ENCODE measurements at regions of chr14 and their contacts with region 1.

Region 1: DNA sequence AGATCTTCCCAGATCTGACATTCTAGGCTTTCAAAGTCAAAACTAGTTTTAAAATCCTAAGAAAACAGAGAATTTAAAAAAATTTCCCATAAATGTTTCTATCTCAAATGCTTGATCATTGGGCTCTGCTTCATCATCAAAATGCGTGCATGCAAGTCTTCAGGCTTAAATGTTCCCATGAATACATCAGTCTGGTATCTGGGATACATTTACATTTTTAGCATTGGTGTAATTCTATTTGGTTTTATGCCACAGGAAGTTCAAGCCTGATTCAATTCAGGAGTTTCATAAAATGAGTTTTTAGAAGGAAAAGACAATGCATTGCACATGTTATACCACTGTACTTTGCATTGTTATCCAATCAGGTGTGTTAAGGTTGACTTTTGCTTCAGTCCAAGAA is 336.4 kb downstream of the PCNX1 start:
- DNase-seq: no peak
- H3K4me3 ChIP-seq: no peak overlapping the region
- H3K27ac ChIP-seq: no peak overlapping the region
- H3K4me1 ChIP-seq: no peaks in the 10 kb centered on the region
- H3K27me3 ChIP-seq: no peaks in the 10 kb centered on the region
- CTCF ChIP-seq: no peak
- POLR2A ChIP-seq: no peak

Region 2: GRCh38 chr14:70595443-70596185 is 648.1 kb before region 1 on chr14:
- intact Hi-C with region 1: no loop called
- DNase-seq: no peak
- H3K4me3 ChIP-seq: no peak overlapping the region
- H3K27ac ChIP-seq: no peak overlapping the region
- H3K4me1 ChIP-seq: peaks cover 0 to 9% of the 10 kb centered on the region in 2 donors
- H3K27me3 ChIP-seq: no peaks in the 10 kb centered on the region
- CTCF ChIP-seq: no peak
- POLR2A ChIP-seq: no peak

Region 3: GRCh38 chr14:71212683-71213107 is 31.0 kb before region 1 on chr14:
- intact Hi-C with region 1: loop called (anchors 2 kb)
- DNase-seq: no peak
- H3K4me3 ChIP-seq: peak overlapping the region in 1 of 3 donors; percentile 8
- H3K27ac ChIP-seq: peak overlapping the region in 1 of 2 donors; percentile 19
- H3K4me1 ChIP-seq: no peaks in the 10 kb centered on the region
- H3K27me3 ChIP-seq: no peaks in the 10 kb centered on the region
- CTCF ChIP-seq: no peak
- POLR2A ChIP-seq: no peak

Measured in breast epithelium (tissue), 4 donors.